MCF 10A (cell line): ENCODE measurements at regions of chr17 and their contacts with region 1.

Region 1: GRCh38 chr17:6507535-6507934 is 48.8 kb downstream of the PITPNM3 start:
- DNase-seq: peak; percentile 95
- H3K4me3 Mint-ChIP-seq: peak overlapping the region; percentile 38
- H3K27ac Mint-ChIP-seq: peak overlapping the region; percentile 90
- H3K4me1 Mint-ChIP-seq: peaks cover 32% of the 10 kb centered on the region
- H3K27me3 Mint-ChIP-seq: no peaks in the 10 kb centered on the region
- CTCF ChIP-seq: no peak

Region 2: DNA sequence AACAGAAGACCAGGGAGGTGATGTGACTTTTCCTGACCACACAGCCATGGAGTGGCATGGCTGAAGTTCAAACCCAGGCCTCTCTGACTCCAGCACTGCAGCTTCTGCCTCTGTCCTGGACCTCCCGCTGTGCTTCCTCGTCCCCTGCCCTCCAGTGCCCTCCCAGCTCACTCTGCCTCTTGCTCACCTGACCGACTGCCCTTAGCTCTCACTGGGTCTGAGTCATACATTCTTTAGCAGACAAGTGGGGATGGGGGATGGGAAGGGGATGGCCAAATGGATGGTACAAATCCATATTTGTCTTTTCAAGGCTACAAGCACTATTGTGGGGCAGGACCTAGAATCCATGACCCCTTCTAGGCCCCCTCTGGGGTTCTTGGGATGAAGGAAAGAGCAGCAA is 15.8 kb after region 1 on chr17:
- CTCF ChIA-PET with region 1: interaction called, 4 read pairs
- POLR2A ChIA-PET with region 1: interaction called, 8 read pairs
- intact Hi-C with region 1: loop called (anchors 1 kb)
- DNase-seq: peak; percentile 71
- H3K4me3 Mint-ChIP-seq: peak overlapping the region; percentile 26
- H3K27ac Mint-ChIP-seq: peak overlapping the region; percentile 77
- H3K4me1 Mint-ChIP-seq: peaks cover 33% of the 10 kb centered on the region
- H3K27me3 Mint-ChIP-seq: no peaks in the 10 kb centered on the region
- CTCF ChIP-seq: no peak

Region 3: GRCh38 chr17:6548578-6549330 is 41.2 kb after region 1 on chr17:
- CTCF ChIA-PET with region 1: interaction called, 3 read pairs
- POLR2A ChIA-PET with region 1: interaction called, 45 read pairs
- intact Hi-C with region 1: no loop called
- DNase-seq: no peak
- H3K4me3 Mint-ChIP-seq: no peak overlapping the region
- H3K27ac Mint-ChIP-seq: no peak overlapping the region
- H3K4me1 Mint-ChIP-seq: peaks cover 42% of the 10 kb centered on the region
- H3K27me3 Mint-ChIP-seq: no peaks in the 10 kb centered on the region
- CTCF ChIP-seq: no peak

Region 4: DNA sequence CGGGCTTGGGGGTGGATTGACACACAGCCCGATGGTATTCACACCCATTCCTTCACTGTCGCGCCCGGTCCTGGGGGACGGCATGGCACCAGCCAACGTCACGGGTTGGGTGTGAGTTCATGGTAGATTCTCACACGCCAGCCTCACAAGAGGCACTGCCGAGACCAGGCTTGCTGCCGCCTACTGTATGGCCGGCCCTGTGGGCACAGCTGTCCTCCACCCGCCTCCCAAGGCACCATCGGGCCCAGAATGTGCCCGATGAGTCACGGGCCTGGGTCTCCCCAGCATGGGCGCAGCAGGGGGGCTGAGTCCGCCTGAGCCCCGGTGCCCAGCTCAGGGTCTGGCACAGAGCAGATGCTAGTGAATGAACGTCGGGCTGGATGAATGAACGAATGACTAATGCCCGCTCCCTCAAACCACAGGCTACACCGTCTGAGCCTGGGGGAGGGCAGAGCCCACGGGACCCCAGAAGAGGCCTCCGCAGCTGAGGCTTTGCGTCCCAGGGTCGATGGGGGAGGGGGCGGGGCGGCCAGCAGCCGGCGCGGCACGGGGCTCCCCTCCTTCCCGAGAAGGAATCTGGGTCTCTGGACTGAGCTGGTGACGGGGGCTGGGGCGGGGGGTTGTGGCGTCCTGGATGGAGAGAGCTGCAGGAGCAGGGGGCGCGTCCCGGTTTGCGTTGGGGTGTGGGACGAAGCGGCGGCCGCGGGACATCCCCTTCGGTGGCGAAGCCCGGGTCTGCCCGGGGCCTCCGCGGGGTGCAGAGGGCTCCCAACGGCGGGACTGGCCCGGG is 48.0 kb after region 1 on chr17:
- CTCF ChIA-PET with region 1: no interaction called
- POLR2A ChIA-PET with region 1: interaction called, 45 read pairs
- intact Hi-C with region 1: loop called (anchors 1 kb)
- DNase-seq: peak; percentile 79
- H3K4me3 Mint-ChIP-seq: peak overlapping the region; percentile 80
- H3K27ac Mint-ChIP-seq: peak overlapping the region; percentile 79
- H3K4me1 Mint-ChIP-seq: peaks cover 45% of the 10 kb centered on the region
- H3K27me3 Mint-ChIP-seq: no peaks in the 10 kb centered on the region
- CTCF ChIP-seq: no peak

Region 5: GRCh38 chr17:6567529-6568183 is 60.1 kb after region 1 on chr17:
- CTCF ChIA-PET with region 1: no interaction called
- POLR2A ChIA-PET with region 1: interaction called, 13 read pairs
- intact Hi-C with region 1: no loop called
- DNase-seq: peak; percentile 95
- H3K4me3 Mint-ChIP-seq: no peak overlapping the region
- H3K27ac Mint-ChIP-seq: peak overlapping the region; percentile 63
- H3K4me1 Mint-ChIP-seq: peaks cover 23% of the 10 kb centered on the region
- H3K27me3 Mint-ChIP-seq: no peaks in the 10 kb centered on the region
- CTCF ChIP-seq: no peak